Activated T-helper 1 cell treated with anti-CD3 and anti-CD28 coated beads, Interleukin-12 subunit alpha, Interleukin-12 subunit beta, Interleukin-2, Interleukin-4 antibody, amounts not matched to agents 30 ng/mL and 10 ng/mL and 1 ng/mL, durations not matched to agents 14 hours and 24 hours and 36 hours (primary cell): ENCODE measurements at regions of chr4 and their contacts with region 1.

Region 1: GRCh38 chr4:54233277-54233696 is 4.2 kb downstream of the PDGFRA start:
- DNase-seq: peak; percentile 64
- H3K4me3 Mint-ChIP-seq: peak overlapping the region; percentile 57
- H3K27ac Mint-ChIP-seq: no peak overlapping the region
- H3K4me1 Mint-ChIP-seq: peaks cover 12% of the 10 kb centered on the region
- H3K27me3 Mint-ChIP-seq: peaks cover 53% of the 10 kb centered on the region

Region 2: GRCh38 chr4:52545099-52546069 is 1687.9 kb before region 1 on chr4:
- intact Hi-C with region 1: loop called (anchors 10 kb)
- DNase-seq: peak; percentile 22
- H3K4me3 Mint-ChIP-seq: no peak overlapping the region
- H3K27ac Mint-ChIP-seq: no peak overlapping the region
- H3K4me1 Mint-ChIP-seq: no peaks in the 10 kb centered on the region
- H3K27me3 Mint-ChIP-seq: no peaks in the 10 kb centered on the region

Region 3: DNA sequence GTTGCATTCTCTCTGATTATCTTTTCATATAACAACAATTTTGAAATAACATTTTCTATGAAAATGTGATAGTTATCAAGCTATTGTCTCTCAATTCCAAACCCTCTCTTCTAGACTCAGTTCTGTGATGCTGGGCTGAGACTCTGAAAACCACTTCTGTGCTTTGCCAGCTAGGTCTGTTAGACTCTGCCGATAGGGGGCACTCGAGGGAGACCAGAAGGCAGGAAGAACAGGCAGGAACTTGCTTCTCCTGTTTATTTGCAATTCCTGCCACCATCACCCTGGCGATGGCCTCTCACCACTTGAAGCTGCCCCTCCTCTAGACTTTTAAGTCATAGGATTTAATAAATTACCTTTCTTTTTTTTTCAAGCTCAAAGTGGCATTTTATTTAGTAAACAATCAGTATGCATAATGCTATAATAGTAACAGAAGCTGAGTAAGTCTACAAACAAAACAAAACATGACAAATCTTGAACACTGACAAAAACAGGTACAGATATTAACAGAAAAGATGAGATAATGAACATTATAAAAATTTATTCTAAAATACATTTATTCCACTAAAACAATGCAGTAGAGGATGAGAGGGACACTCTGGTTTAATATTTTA is 1321.5 kb before region 1 on chr4:
- intact Hi-C with region 1: loop called (anchors 2 kb)
- DNase-seq: peak; percentile 47
- H3K4me3 Mint-ChIP-seq: no peak overlapping the region
- H3K27ac Mint-ChIP-seq: no peak overlapping the region
- H3K4me1 Mint-ChIP-seq: no peaks in the 10 kb centered on the region
- H3K27me3 Mint-ChIP-seq: no peaks in the 10 kb centered on the region

Region 4: GRCh38 chr4:53132132-53132896 is 1101.0 kb before region 1 on chr4:
- intact Hi-C with region 1: no loop called
- DNase-seq: no peak
- H3K4me3 Mint-ChIP-seq: no peak overlapping the region
- H3K27ac Mint-ChIP-seq: peak overlapping the region; percentile 79
- H3K4me1 Mint-ChIP-seq: peaks cover 31% of the 10 kb centered on the region
- H3K27me3 Mint-ChIP-seq: no peaks in the 10 kb centered on the region

Region 5: GRCh38 chr4:53196882-53197771 is 1036.2 kb before region 1 on chr4:
- intact Hi-C with region 1: loop called (anchors 1 kb)
- DNase-seq: no peak
- H3K4me3 Mint-ChIP-seq: no peak overlapping the region
- H3K27ac Mint-ChIP-seq: no peak overlapping the region
- H3K4me1 Mint-ChIP-seq: peaks cover 4% of the 10 kb centered on the region
- H3K27me3 Mint-ChIP-seq: no peaks in the 10 kb centered on the region

Region 6: DNA sequence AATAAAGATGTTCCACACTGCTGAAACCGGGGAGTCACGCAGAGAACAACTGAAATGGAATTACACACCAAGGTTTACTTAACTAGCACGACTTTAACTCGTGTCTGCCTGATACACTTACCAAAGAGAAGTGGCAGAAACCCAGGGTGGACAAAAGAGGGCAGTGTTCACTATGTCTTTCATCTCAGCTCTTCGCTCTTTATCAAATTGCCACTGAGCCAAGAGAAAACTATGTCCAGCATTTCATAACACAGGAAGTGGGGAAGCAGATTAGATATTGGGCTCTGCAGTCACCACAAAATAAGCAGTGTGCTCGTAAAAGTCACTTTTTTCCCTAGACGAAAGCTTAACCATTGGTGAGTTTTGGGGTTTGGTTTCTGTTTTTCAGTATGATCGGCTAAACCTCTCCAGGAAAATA is 324.6 kb before region 1 on chr4:
- intact Hi-C with region 1: loop called (anchors 1 kb)
- DNase-seq: no peak
- H3K4me3 Mint-ChIP-seq: no peak overlapping the region
- H3K27ac Mint-ChIP-seq: no peak overlapping the region
- H3K4me1 Mint-ChIP-seq: peaks cover 17% of the 10 kb centered on the region
- H3K27me3 Mint-ChIP-seq: peaks cover 30% of the 10 kb centered on the region

Region 7: GRCh38 chr4:54091637-54092404 is 141.5 kb before region 1 on chr4:
- intact Hi-C with region 1: loop called (anchors 2 kb)
- DNase-seq: peak; percentile 71
- H3K4me3 Mint-ChIP-seq: peak overlapping the region; percentile 82
- H3K27ac Mint-ChIP-seq: peak overlapping the region; percentile 30
- H3K4me1 Mint-ChIP-seq: peaks cover 30% of the 10 kb centered on the region
- H3K27me3 Mint-ChIP-seq: peaks cover 74% of the 10 kb centered on the region

Region 8: GRCh38 chr4:54217642-54218495 is 15.4 kb before region 1 on chr4:
- intact Hi-C with region 1: loop called (anchors 2 kb)
- DNase-seq: peak; percentile 19
- H3K4me3 Mint-ChIP-seq: no peak overlapping the region
- H3K27ac Mint-ChIP-seq: no peak overlapping the region
- H3K4me1 Mint-ChIP-seq: peaks cover 4% of the 10 kb centered on the region
- H3K27me3 Mint-ChIP-seq: peaks cover 23% of the 10 kb centered on the region